ENCODE measurements at regions of chr2 and their contacts with region 1.

Region 1: DNA sequence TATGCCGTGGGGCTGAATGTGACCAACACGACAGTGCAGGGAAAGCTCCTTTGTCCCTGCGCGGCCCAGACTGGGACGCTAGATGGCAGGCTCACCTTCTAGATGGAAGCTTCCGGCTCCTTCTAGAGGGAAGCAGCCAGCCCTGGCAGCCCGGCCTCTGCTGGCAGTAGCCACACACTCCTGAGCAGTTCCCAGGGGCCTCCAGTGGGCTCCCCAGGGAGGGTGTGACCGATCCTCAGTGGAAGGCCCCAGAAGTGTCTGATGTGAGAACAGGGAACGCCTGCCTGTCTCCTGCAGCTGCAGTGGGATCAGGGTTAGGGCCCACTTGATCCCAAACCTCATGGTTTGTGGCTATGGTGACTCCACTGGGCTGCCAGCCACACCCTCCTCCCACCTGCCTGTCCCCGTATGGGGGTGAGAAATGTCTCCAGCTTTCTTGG is 48.5 kb upstream of the LRPPRC start:
- DNase-seq: peak; percentile 79 to 86
- H3K4me3 ChIP-seq: no peak overlapping the region
- H3K27ac ChIP-seq: no peak overlapping the region
- H3K4me1 ChIP-seq: no peaks in the 10 kb centered on the region
- H3K27me3 ChIP-seq: no peaks in the 10 kb centered on the region
- CTCF ChIP-seq: peak; percentile 90

Region 2: DNA sequence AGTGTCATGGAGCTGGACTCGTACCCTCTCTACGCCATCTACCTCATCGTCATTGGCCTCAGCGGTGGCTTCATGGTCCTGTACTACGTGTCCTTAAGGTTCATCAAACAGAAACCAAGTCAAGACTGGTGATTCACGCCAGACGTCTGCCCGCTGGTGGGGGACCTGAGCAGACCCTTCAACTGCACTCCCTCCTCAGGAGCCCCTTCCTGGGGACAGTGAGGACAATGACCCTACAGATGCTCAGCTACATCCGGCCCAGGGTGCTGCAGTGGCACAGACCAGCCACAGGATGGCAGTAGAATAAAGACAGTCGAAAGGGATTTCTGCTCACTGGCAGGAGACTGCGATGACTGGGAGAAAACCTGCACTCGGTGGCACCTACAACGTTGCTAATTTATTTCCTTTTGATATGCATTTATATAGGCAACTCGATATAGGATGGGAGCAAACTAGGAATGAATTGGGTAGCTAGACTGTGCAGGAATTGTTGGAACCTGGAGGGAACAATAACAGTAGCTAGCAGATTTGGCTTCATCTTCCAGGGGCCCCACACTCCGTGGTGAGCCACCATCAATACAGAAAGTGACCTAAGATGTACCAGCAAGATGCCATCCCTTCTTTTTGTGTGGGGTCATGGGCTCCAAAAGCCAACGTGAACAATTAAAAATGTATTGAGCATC is 166.4 kb before region 1 on chr2:
- CTCF ChIA-PET with region 1: no interaction called
- POLR2A ChIA-PET with region 1: no interaction called
- intact Hi-C with region 1: loop called (anchors 1 kb)
- DNase-seq: peak; percentile 64 to 71
- H3K4me3 ChIP-seq: no peak overlapping the region
- H3K27ac ChIP-seq: no peak overlapping the region
- H3K4me1 ChIP-seq: peaks cover 16% of the 10 kb centered on the region
- H3K27me3 ChIP-seq: peaks cover 42% of the 10 kb centered on the region
- CTCF ChIP-seq: peak; percentile 99

Region 3: DNA sequence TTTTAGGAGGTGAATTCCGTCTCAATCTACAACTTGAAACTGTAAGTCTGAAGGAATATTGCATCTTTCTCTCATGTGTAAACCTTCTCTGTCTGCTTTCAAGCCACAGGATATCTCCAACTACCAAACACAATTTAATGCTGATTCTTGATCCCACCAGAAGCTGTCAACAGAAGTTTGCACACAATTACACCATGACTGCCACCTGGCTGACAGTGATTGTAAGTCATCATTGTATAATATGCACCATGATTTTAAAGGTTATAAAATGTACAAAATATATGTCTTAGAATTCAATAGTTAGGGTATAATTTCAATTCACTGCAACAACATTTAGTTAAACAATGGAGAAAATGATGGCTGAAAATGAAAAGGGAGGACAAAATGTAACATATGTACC is 298.6 kb after region 1 on chr2:
- CTCF ChIA-PET with region 1: interaction called, 7 read pairs
- POLR2A ChIA-PET with region 1: no interaction called
- intact Hi-C with region 1: loop called (anchors 1 kb)
- DNase-seq: no peak
- H3K4me3 ChIP-seq: no peak overlapping the region
- H3K27ac ChIP-seq: no peak overlapping the region
- H3K4me1 ChIP-seq: no peaks in the 10 kb centered on the region
- H3K27me3 ChIP-seq: no peaks in the 10 kb centered on the region
- CTCF ChIP-seq: peak; percentile 73

Region 4: GRCh38 chr2:44433881-44434280 is 389.6 kb after region 1 on chr2:
- CTCF ChIA-PET with region 1: no interaction called
- POLR2A ChIA-PET with region 1: no interaction called
- intact Hi-C with region 1: loop called (anchors 1 kb)
- DNase-seq: peak; percentile 25 to 97
- H3K4me3 ChIP-seq: no peak overlapping the region
- H3K27ac ChIP-seq: 0 out of 2 replicates have a peak overlapping the region, but pooled peaks have one; percentile 1
- H3K4me1 ChIP-seq: peaks cover 20% of the 10 kb centered on the region
- H3K27me3 ChIP-seq: no peaks in the 10 kb centered on the region
- CTCF ChIP-seq: no peak

Region 5: GRCh38 chr2:44955593-44956392 is 911.5 kb after region 1 on chr2:
- CTCF ChIA-PET with region 1: interaction called, 8 read pairs
- POLR2A ChIA-PET with region 1: no interaction called
- intact Hi-C with region 1: loop called (anchors 2 kb)
- DNase-seq: peak; percentile 58 to 83
- H3K4me3 ChIP-seq: peak overlapping the region; percentile 49; the same call in 1 of the 2 replicates
- H3K27ac ChIP-seq: no peak overlapping the region
- H3K4me1 ChIP-seq: peaks cover 10% of the 10 kb centered on the region
- H3K27me3 ChIP-seq: no peaks in the 10 kb centered on the region
- CTCF ChIP-seq: peak; percentile 91